Activated CD4-positive, alpha-beta T cell treated with anti-CD3 and anti-CD28 coated beads for 36 hours (primary cell): ENCODE measurements at regions of chr1 and their contacts with region 1.

Region 1: DNA sequence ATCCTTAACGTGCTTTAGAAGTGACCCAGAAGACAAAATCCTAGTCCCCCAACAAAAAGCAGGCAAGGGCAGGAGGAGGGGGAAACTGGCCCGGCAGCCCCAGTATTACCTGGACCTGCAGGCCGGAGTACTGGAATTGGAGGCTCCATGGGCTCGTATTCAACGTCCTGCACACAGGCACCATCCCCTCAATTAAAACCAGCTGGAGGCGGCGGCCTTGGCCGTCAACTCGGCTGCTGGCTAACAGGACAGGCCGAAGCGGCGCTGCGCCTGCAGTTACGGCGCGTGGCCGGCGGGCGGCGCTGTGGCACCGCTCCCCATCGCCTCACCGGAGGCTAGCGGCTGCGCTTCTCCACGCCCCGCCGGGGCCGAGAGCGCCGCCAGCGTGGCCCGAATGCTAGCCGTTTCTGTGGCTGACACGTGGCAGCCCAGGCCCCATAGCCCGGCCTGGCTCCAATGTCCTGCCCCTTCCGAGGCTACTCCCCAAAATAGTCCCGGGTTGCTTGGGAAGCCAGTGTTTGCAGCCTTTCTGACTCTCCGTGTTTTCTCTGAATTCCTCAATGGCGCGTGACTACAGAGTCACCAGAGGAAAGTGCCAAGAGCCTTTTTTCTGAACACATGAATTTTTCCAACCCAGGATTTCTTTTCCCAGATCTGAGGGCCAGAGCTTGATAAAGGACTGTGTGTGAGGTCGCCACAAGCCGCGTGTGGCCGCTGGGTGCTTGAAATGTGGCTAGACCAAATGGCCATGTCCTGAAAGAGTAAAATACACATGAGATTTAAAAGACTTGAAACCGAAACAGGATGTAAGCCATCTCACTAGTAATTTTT is 82.5 kb downstream of the HHIPL2 start:
- DNase-seq: peak; percentile 88
- ATAC-seq: peak; percentile 93
- H3K4me3 Mint-ChIP-seq: peak overlapping the region; percentile 63
- H3K27ac Mint-ChIP-seq: peak overlapping the region; percentile 85
- H3K4me1 Mint-ChIP-seq: peaks cover 11% of the 10 kb centered on the region
- H3K27me3 Mint-ChIP-seq: no peaks in the 10 kb centered on the region

Region 2: GRCh38 chr1:222301652-222302051 is 163.8 kb before region 1 on chr1:
- CTCF ChIA-PET with region 1: no interaction called
- POLR2A ChIA-PET with region 1: no interaction called
- intact Hi-C with region 1: no loop called
- DNase-seq: no peak
- ATAC-seq: no peak
- H3K4me3 Mint-ChIP-seq: no peak overlapping the region
- H3K27ac Mint-ChIP-seq: no peak overlapping the region
- H3K4me1 Mint-ChIP-seq: peaks cover 12% of the 10 kb centered on the region
- H3K27me3 Mint-ChIP-seq: peaks cover 2% of the 10 kb centered on the region

Region 3: DNA sequence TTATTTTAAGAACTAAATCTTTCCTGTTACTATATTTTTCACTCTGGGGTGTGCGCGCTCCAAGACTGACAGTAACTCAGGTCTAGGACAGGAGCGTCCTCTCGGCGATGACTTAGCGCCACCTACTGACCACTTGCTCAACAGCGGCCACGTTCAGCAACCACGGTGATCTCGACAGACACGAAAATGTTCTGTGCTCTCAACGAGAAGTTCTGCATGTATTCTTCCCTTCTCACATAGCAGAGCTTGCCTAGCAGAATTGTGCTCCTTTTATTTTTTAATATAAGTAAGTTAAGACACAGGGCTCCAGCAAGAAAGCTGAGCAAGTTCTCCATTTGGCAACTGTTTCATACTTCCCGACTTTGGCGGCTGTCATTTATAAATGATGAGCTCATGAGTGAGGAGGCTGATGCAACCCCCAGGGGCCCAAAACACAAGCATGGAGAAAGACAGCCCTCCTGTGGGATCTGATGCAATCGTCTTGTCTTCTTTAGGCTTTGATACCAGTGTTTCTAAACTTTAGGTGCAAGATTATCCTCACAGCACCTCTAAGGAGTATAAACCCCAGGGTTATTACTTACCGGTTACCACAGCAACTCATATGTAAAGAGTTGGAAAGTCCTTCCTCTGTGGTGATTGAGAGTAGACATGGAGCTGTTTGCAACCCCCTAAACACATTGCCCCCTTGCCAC is 10.1 kb before region 1 on chr1:
- CTCF ChIA-PET with region 1: interaction called, 19 read pairs
- POLR2A ChIA-PET with region 1: no interaction called
- intact Hi-C with region 1: no loop called
- DNase-seq: peak; percentile 91
- ATAC-seq: peak; percentile 99
- H3K4me3 Mint-ChIP-seq: no peak overlapping the region
- H3K27ac Mint-ChIP-seq: peak overlapping the region; percentile 21
- H3K4me1 Mint-ChIP-seq: peaks cover 16% of the 10 kb centered on the region
- H3K27me3 Mint-ChIP-seq: no peaks in the 10 kb centered on the region

Region 4: GRCh38 chr1:222617367-222617951 is 152.0 kb after region 1 on chr1:
- CTCF ChIA-PET with region 1: no interaction called
- POLR2A ChIA-PET with region 1: no interaction called
- intact Hi-C with region 1: loop called (anchors 1 to 5 kb)
- DNase-seq: peak; percentile 94
- ATAC-seq: peak; percentile 95
- H3K4me3 Mint-ChIP-seq: peak overlapping the region; percentile 83
- H3K27ac Mint-ChIP-seq: peak overlapping the region; percentile 88
- H3K4me1 Mint-ChIP-seq: peaks cover 31% of the 10 kb centered on the region
- H3K27me3 Mint-ChIP-seq: peaks cover 11% of the 10 kb centered on the region

Region 5: GRCh38 chr1:222643938-222644635 is 178.7 kb after region 1 on chr1:
- CTCF ChIA-PET with region 1: interaction called, 8 read pairs
- POLR2A ChIA-PET with region 1: no interaction called
- intact Hi-C with region 1: loop called in 1 of 2 experiments (anchors 2 kb)
- DNase-seq: peak; percentile 98
- ATAC-seq: peak; percentile 97
- H3K4me3 Mint-ChIP-seq: peak overlapping the region; percentile 86
- H3K27ac Mint-ChIP-seq: peak overlapping the region; percentile 95
- H3K4me1 Mint-ChIP-seq: peaks cover 26% of the 10 kb centered on the region
- H3K27me3 Mint-ChIP-seq: no peaks in the 10 kb centered on the region

Region 6: GRCh38 chr1:222792744-222793143 is 327.3 kb after region 1 on chr1:
- CTCF ChIA-PET with region 1: no interaction called
- POLR2A ChIA-PET with region 1: no interaction called
- intact Hi-C with region 1: loop called in 1 of 2 experiments (anchors 2 kb)
- DNase-seq: no peak
- ATAC-seq: no peak
- H3K4me3 Mint-ChIP-seq: no peak overlapping the region
- H3K27ac Mint-ChIP-seq: no peak overlapping the region
- H3K4me1 Mint-ChIP-seq: peaks cover 7% of the 10 kb centered on the region
- H3K27me3 Mint-ChIP-seq: no peaks in the 10 kb centered on the region

Region 7: GRCh38 chr1:222880586-222880985 is 415.2 kb after region 1 on chr1:
- CTCF ChIA-PET with region 1: no interaction called
- POLR2A ChIA-PET with region 1: no interaction called
- intact Hi-C with region 1: loop called in 1 of 2 experiments (anchors 10 kb)
- DNase-seq: peak; percentile 55
- ATAC-seq: peak; percentile 92
- H3K4me3 Mint-ChIP-seq: no peak overlapping the region
- H3K27ac Mint-ChIP-seq: peak overlapping the region; percentile 37
- H3K4me1 Mint-ChIP-seq: peaks cover 19% of the 10 kb centered on the region
- H3K27me3 Mint-ChIP-seq: no peaks in the 10 kb centered on the region

Region 8: DNA sequence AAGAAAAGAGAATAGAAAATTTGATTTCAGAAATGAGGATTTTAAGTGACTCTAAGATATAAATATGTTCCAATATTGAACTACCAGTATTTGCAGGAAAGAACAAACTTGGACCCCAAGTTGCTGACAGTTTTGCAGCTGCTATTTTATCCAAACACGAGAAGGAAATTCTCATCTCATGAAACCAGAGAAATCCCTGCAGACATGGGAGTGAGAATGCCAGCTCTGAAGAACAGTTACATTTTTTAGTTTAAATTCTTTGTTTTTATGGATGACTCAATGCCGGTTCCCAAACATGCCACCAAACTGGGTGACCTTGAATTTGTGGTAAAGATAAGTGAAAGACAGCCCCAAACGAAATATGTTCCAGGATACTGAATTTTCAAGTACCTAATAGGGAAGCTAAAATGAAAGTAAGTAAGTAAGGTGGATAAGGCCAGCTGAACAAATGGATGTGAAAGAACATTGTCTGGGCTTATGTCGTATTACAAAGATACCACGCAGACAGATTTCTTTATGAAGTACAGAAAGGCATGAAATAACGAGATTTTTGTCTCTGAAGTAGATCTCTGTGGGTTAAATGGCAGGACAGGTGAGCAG is 657.7 kb after region 1 on chr1:
- CTCF ChIA-PET with region 1: no interaction called
- POLR2A ChIA-PET with region 1: no interaction called
- intact Hi-C with region 1: loop called in 1 of 2 experiments (anchors 1 kb)
- DNase-seq: no peak
- ATAC-seq: no peak
- H3K4me3 Mint-ChIP-seq: peak overlapping the region; percentile 43
- H3K27ac Mint-ChIP-seq: no peak overlapping the region
- H3K4me1 Mint-ChIP-seq: peaks cover 6% of the 10 kb centered on the region
- H3K27me3 Mint-ChIP-seq: peaks cover 2% of the 10 kb centered on the region